WTC11 (cell line): ENCODE measurements at regions of chr12 and their contacts with region 1.

Region 1: GRCh38 chr12:54337280-54337842 is 12.4 kb downstream of the COPZ1 start:
- DNase-seq: no peak
- ATAC-seq: no peak
- H3K4me3 Mint-ChIP-seq: no peak overlapping the region
- H3K27ac Mint-ChIP-seq: no peak overlapping the region
- H3K4me1 Mint-ChIP-seq: peaks cover 5% of the 10 kb centered on the region
- H3K27me3 Mint-ChIP-seq: no peaks in the 10 kb centered on the region
- CTCF ChIP-seq: no peak

Region 2: DNA sequence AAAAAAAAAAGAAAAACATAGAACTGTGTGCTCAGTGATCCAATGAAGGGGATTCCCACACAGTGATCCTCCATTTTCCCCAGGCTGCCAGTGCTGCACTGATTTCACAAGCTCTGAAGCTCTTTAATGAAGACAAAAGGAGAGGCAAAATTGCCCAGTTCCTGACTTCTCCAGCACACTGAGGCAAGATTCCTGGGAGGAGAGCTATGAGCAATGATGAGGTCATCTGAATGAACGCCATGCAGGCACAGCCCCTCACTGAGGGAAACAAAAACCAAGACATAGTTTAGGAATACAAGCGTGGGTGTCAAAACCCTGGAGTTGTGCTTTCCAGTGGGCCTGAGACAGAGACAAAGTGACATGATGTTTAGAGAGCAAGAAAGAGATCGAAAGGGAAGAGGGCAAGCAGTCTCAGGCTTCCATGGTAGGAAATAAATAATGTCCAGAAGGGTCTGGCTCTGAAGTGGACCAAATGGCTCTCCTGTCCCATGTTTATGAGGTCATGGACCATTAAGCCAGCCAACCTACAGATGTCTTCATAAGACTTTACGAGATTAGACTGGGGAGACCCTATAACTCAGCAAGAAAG is 107.6 kb before region 1 on chr12:
- CTCF ChIA-PET with region 1: interaction called, 14 read pairs
- POLR2A ChIA-PET with region 1: interaction called, 5 read pairs
- DNase-seq: no peak
- ATAC-seq: no peak
- H3K4me3 Mint-ChIP-seq: no peak overlapping the region
- H3K27ac Mint-ChIP-seq: peak overlapping the region; percentile 62
- H3K4me1 Mint-ChIP-seq: peaks cover 11% of the 10 kb centered on the region
- H3K27me3 Mint-ChIP-seq: no peaks in the 10 kb centered on the region
- CTCF ChIP-seq: no peak

Region 3: DNA sequence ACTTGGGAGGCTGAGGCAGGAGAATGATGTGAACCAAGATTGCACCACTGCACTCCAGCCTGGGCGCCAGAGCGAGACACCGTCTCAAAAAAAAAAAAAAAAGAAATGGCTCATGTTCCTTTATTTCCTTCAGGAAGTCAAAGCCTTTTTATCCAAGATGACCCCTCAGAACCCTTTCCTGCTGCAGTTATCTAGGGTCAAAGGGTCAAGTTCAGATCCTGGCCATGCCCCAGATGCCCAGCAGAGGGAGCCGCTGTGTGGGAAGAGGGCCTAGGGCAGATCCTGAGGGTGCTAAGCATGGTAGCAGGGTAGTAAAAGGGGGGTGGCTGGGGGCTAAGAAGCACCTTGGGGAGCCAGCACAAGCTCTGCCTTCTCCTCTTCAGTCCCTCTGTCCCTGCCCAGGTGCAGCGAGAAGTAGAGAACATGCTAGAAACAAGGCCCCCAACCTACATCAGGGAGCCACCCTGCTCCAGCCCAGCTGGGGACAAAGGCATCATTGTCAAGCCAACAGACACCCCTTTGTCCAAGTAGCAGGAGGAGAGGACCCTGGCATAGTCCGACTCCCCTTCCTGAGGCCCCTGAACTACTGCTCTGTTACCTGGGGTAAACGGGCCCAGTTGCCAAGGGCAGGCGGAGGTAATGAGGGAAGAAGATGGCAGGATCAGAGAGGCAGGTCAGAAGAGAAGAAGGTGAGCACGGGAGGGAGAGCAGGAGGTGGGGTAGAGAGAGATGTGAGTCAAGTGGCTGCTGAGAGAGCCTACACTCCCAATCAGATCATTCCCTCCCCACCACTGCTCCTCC is 43.0 kb before region 1 on chr12:
- CTCF ChIA-PET with region 1: interaction called, 19 read pairs
- POLR2A ChIA-PET with region 1: no interaction called
- DNase-seq: peak; percentile 88
- ATAC-seq: peak; percentile 76
- H3K4me3 Mint-ChIP-seq: no peak overlapping the region
- H3K27ac Mint-ChIP-seq: no peak overlapping the region
- H3K4me1 Mint-ChIP-seq: peaks cover 4% of the 10 kb centered on the region
- H3K27me3 Mint-ChIP-seq: peaks cover 4% of the 10 kb centered on the region
- CTCF ChIP-seq: peak; percentile 77

Region 4: GRCh38 chr12:54306925-54307741 is 30.2 kb before region 1 on chr12:
- CTCF ChIA-PET with region 1: interaction called, 14 read pairs
- POLR2A ChIA-PET with region 1: no interaction called
- DNase-seq: peak; percentile 45
- ATAC-seq: peak; percentile 84
- H3K4me3 Mint-ChIP-seq: no peak overlapping the region
- H3K27ac Mint-ChIP-seq: no peak overlapping the region
- H3K4me1 Mint-ChIP-seq: peaks cover 31% of the 10 kb centered on the region
- H3K27me3 Mint-ChIP-seq: no peaks in the 10 kb centered on the region
- CTCF ChIP-seq: no peak

Region 5: DNA sequence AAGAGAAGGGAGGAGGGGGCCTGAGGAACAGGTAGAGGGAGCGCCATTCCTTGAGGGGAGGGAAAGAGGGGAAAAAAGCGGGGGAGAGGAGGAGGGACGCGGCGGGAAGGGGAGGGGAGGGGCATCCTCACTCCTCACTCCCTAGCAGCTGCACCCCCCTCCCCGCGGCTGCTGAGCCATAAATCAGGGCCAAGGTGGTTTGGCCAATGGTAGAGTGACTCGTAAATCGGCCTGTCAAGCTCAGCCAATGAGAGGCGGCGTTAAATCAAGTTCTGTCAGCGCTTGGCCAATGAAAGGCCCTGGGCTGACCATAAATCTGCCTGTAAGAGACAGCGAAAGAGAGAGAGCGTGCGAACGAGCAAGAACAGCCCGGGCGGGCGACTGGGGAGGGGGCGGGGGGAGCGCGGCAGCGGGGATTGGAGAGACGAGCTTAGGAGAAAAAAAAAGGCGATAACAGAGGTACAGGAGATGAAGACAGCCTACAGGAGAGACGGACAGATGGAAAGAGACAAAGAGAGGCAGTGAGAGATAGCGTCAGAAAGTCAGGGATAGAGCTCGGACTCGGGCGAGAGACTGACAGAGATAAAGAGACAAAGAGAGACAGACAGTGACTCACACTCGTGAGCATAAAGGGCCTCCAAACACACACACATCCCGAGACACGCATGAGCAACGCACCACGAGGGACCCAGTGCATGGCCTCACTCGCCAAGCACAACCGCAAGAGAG is 21.8 kb after region 1 on chr12:
- CTCF ChIA-PET with region 1: interaction called, 200 read pairs
- POLR2A ChIA-PET with region 1: interaction called, 4 read pairs
- DNase-seq: peak; percentile 96
- ATAC-seq: peak; percentile 77
- H3K4me3 Mint-ChIP-seq: no peak overlapping the region
- H3K27ac Mint-ChIP-seq: no peak overlapping the region
- H3K4me1 Mint-ChIP-seq: peaks cover 7% of the 10 kb centered on the region
- H3K27me3 Mint-ChIP-seq: peaks cover 8% of the 10 kb centered on the region
- CTCF ChIP-seq: no peak